ENCODE measurements at regions of chr22 and their contacts with region 1.

Region 1: GRCh38 chr22:17272511-17272991 is 53.3 kb upstream of the ADA2 start:
- DNase-seq: peak in 1 of 2 experiments; percentile 71
- H3K4me3 ChIP-seq: peak overlapping the region in 1 of 4 experiments; percentile 16; a peak in 1 of 8 replicates
- H3K27ac ChIP-seq: peak overlapping the region; percentile 70
- H3K4me1 ChIP-seq: peaks cover 11 to 34% (median 17%) of the 10 kb centered on the region in 4 experiments
- H3K27me3 ChIP-seq: no peaks in the 10 kb centered on the region
- CTCF ChIP-seq: no peak
- EP300 ChIP-seq: no peak
- POLR2A ChIP-seq: 0 out of 3 replicates have a peak, but pooled peaks of 1 of the 2 experiments have one; percentile 36
- RAD21 ChIP-seq: 0 out of 4 replicates have a peak, but pooled peaks of 1 of the 2 experiments have one; percentile 1

Region 2: DNA sequence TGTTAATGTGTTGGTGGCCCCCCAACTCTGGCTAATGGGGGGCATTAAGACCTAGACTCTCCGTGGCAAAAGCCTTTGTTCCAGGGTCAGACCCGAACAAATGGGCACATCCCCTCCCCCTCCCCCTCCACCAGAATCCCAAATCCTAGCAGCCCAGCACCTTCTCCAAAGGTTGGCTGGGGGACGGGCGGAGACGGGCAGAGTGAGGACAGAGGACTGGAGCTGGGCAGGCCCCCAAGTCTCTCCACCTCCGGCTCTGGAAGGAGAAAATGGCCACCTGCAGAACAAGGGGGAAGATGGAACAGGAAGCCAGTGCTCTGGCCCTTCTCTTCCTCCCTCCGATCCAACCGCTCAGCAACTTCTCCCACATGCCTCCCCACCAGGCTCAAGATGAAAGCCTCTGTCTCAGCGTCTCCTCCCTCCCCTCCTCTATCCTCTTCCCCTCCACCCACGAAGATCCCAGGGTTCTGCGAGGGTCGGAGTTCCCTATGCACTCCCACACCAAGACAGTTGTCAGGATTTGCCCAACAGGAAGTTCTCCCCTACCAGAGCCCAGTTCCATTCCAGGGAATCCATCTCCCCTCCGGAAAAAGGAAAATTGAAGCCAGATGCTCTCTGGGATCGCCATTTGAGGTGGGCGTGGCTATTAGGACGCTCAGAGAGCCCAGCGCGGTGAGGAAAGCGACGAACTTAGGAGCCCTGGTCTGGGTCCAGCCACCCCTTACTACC is 73.4 kb before region 1 on chr22:
- CTCF ChIA-PET with region 1: interaction called, 10 read pairs
- POLR2A ChIA-PET with region 1: interaction called, 5 read pairs
- DNase-seq: peak; percentile 50 to 77
- H3K4me3 ChIP-seq: peak overlapping the region; percentile 47 to 65 (median 56); a peak in 7 of 8 replicates
- H3K27ac ChIP-seq: peak overlapping the region; percentile 99
- H3K4me1 ChIP-seq: peaks cover 16 to 31% (median 19%) of the 10 kb centered on the region in 4 experiments
- H3K27me3 ChIP-seq: no peaks in the 10 kb centered on the region
- CTCF ChIP-seq: no peak
- EP300 ChIP-seq: peak in 1 of 2 experiments; percentile 78; a peak in 1 of 3 replicates
- POLR2A ChIP-seq: peak; percentile 25 to 97
- RAD21 ChIP-seq: no peak

Region 3: GRCh38 chr22:17258015-17258787 is 14.3 kb before region 1 on chr22:
- CTCF ChIA-PET with region 1: interaction called, 14 read pairs
- POLR2A ChIA-PET with region 1: interaction called, 21 read pairs
- DNase-seq: peak in 1 of 2 experiments; percentile 74
- H3K4me3 ChIP-seq: peak overlapping the region in 3 of 4 experiments; percentile 2 to 40 (median 8); a peak in 4 of 8 replicates
- H3K27ac ChIP-seq: peak overlapping the region; percentile 77
- H3K4me1 ChIP-seq: peaks cover 26 to 42% (median 32%) of the 10 kb centered on the region in 4 experiments
- H3K27me3 ChIP-seq: no peaks in the 10 kb centered on the region
- CTCF ChIP-seq: no peak
- EP300 ChIP-seq: no peak
- POLR2A ChIP-seq: no peak
- RAD21 ChIP-seq: no peak; a peak in 1 of 4 replicates

Region 4: DNA sequence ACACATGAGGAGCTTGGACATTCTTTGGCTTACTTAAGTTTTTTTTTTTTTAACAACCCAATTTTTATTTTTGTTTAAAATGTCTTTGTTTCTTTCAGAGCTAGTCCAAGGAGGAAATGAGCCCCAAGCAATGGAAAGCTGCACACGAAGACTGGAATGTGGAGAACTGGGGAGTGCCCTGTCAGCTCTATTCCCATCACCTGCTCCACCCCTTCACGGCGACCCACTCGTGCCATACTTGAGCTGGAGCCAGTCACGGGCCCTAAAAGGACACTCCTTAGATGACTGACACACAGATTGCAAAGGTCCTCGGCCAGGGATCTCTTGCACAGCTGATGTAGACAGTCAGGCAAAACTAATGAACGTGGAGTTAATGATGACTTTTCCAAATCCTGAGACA is 280.2 kb after region 1 on chr22:
- CTCF ChIA-PET with region 1: no interaction called
- POLR2A ChIA-PET with region 1: no interaction called
- DNase-seq: no peak
- H3K4me3 ChIP-seq: no peak overlapping the region
- H3K27ac ChIP-seq: no peak overlapping the region
- H3K4me1 ChIP-seq: no peaks in the 10 kb centered on the region
- H3K27me3 ChIP-seq: no peaks in the 10 kb centered on the region
- CTCF ChIP-seq: no peak
- EP300 ChIP-seq: no peak
- POLR2A ChIP-seq: no peak
- RAD21 ChIP-seq: no peak

Measured in H1 (cell line).